ENCODE measurements at regions of chr14 and their contacts with region 1.

Region 1: GRCh38 chr14:73713803-73714655 is at the start of gene PNMA1:
- DNase-seq: peak; percentile 86
- H3K4me3 Mint-ChIP-seq: peak within 1 kb of the TSS; percentile 87
- H3K27ac Mint-ChIP-seq: peak within 1 kb of the TSS; percentile 92
- H3K4me1 Mint-ChIP-seq: peaks cover 30% of the 10 kb centered on the region
- H3K27me3 Mint-ChIP-seq: no peaks in the 10 kb centered on the region
- total RNA-seq, gene PNMA1: 29.7 and 30.6 TPM in 2 replicates

Region 2: GRCh38 chr14:73136387-73137225 is 577.4 kb before region 1 on chr14 and contains the start of gene PSEN1:
- intact Hi-C with region 1: loop called (anchors 5 kb)
- DNase-seq: peak; percentile 98
- H3K4me3 Mint-ChIP-seq: peak within 1 kb of the TSS; percentile 86
- H3K27ac Mint-ChIP-seq: peak within 1 kb of the TSS; percentile 100
- H3K4me1 Mint-ChIP-seq: peaks cover 19% of the 10 kb centered on the region
- H3K27me3 Mint-ChIP-seq: no peaks in the 10 kb centered on the region
- total RNA-seq, gene PSEN1: 41.1 and 41.9 TPM in 2 replicates

Region 3: DNA sequence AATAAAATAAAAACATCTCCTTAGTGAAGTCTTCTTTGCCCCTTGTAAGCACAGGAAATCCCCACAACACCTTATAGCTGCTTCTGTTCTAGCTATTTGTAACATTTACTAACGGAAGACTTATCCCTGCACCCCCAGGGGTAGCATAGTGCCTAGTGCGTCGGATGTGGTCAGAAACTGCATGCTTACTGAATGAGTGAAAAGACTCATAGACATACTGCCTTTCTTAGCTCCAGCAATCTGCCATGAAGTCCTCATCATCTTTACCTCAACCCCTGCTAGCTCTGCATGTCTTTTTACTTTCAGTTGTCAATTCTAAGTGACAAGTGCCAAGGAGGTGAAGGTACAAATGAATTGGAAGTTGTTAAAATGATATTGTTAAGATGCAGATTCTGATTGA is 210.4 kb before region 1 on chr14:
- intact Hi-C with region 1: loop called (anchors 5 kb)
- DNase-seq: no peak
- H3K4me3 Mint-ChIP-seq: no peak overlapping the region
- H3K27ac Mint-ChIP-seq: no peak overlapping the region
- H3K4me1 Mint-ChIP-seq: no peaks in the 10 kb centered on the region
- H3K27me3 Mint-ChIP-seq: no peaks in the 10 kb centered on the region

Region 4: GRCh38 chr14:73644531-73645247 is 69.3 kb before region 1 on chr14 and contains the start of gene DNAL1:
- intact Hi-C with region 1: loop called (anchors 1 kb)
- DNase-seq: peak; percentile 92
- H3K4me3 Mint-ChIP-seq: peak within 1 kb of the TSS; percentile 86
- H3K27ac Mint-ChIP-seq: peak within 1 kb of the TSS; percentile 71
- H3K4me1 Mint-ChIP-seq: peaks cover 15% of the 10 kb centered on the region
- H3K27me3 Mint-ChIP-seq: no peaks in the 10 kb centered on the region
- total RNA-seq, gene DNAL1: 5.3 and 8.5 TPM in 2 replicates

Region 5: GRCh38 chr14:73728717-73729330 is 14.8 kb after region 1 on chr14:
- intact Hi-C with region 1: loop called (anchors 1 kb)
- DNase-seq: peak; percentile 77
- H3K4me3 Mint-ChIP-seq: no peak overlapping the region
- H3K27ac Mint-ChIP-seq: peak overlapping the region; percentile 78
- H3K4me1 Mint-ChIP-seq: peaks cover 30% of the 10 kb centered on the region
- H3K27me3 Mint-ChIP-seq: no peaks in the 10 kb centered on the region

Region 6: GRCh38 chr14:73759714-73760597 is 45.9 kb after region 1 on chr14:
- intact Hi-C with region 1: loop called (anchors 1 kb)
- DNase-seq: peak; percentile 95
- H3K4me3 Mint-ChIP-seq: peak overlapping the region; percentile 85
- H3K27ac Mint-ChIP-seq: peak overlapping the region; percentile 97
- H3K4me1 Mint-ChIP-seq: peaks cover 79% of the 10 kb centered on the region
- H3K27me3 Mint-ChIP-seq: no peaks in the 10 kb centered on the region

Region 7: GRCh38 chr14:74084277-74085046 is 370.4 kb after region 1 on chr14 and contains the starts of genes ALDH6A1 and LIN52:
- intact Hi-C with region 1: loop called (anchors 1 kb)
- DNase-seq: peak; percentile 100
- H3K4me3 Mint-ChIP-seq: peak within 1 kb of the TSS; percentile 94
- H3K27ac Mint-ChIP-seq: peak within 1 kb of the TSS; percentile 94
- H3K4me1 Mint-ChIP-seq: peaks cover 45% of the 10 kb centered on the region
- H3K27me3 Mint-ChIP-seq: peaks cover 4% of the 10 kb centered on the region
- total RNA-seq, gene ALDH6A1: 10.8 and 11.0 TPM in 2 replicates
- total RNA-seq, gene LIN52: 15.9 and 17.2 TPM in 2 replicates

Measured in activated T-helper 1 cell treated with anti-CD3 and anti-CD28 coated beads, Interleukin-12 subunit alpha, Interleukin-12 subunit beta, Interleukin-2, Interleukin-4 antibody, amounts not matched to agents 30 ng/mL and 10 ng/mL and 1 ng/mL, durations not matched to agents 14 hours and 24 hours and 36 hours (primary cell).